ENCODE measurements at regions of chr3 and their contacts with region 1.

Region 1: GRCh38 chr3:50611464-50612233 is at the start of gene CISH:
- DNase-seq: peak; percentile 96
- H3K4me3 ChIP-seq: peak within 1 kb of the TSS; percentile 9 to 51 (median 50)
- H3K27ac ChIP-seq: peak within 1 kb of the TSS; percentile 50
- H3K4me1 ChIP-seq: peaks cover 21% of the 10 kb centered on the region
- H3K27me3 ChIP-seq: no peaks in the 10 kb centered on the region
- CTCF ChIP-seq: peak; percentile 50 to 79
- POLR2A ChIP-seq: no peak
- total RNA-seq, gene CISH: 2.2 and 2.5 TPM in 2 replicates

Region 2: GRCh38 chr3:50436114-50436674 is 175.5 kb before region 1 on chr3:
- CTCF ChIA-PET with region 1: interaction called, 4 read pairs
- POLR2A ChIA-PET with region 1: no interaction called
- dilution Hi-C with region 1: no loop called
- intact Hi-C with region 1: loop called (anchors 1 kb)
- DNase-seq: peak; percentile 42
- H3K4me3 ChIP-seq: no peak overlapping the region
- H3K27ac ChIP-seq: no peak overlapping the region
- H3K4me1 ChIP-seq: no peaks in the 10 kb centered on the region
- H3K27me3 ChIP-seq: no peaks in the 10 kb centered on the region
- CTCF ChIP-seq: peak; percentile 80 to 89
- POLR2A ChIP-seq: no peak

Region 3: GRCh38 chr3:50568947-50569749 is 42.5 kb before region 1 on chr3 and contains the start of gene HEMK1:
- CTCF ChIA-PET with region 1: interaction called, 105 read pairs
- POLR2A ChIA-PET with region 1: interaction called, 9 read pairs
- dilution Hi-C with region 1: no loop called
- intact Hi-C with region 1: loop called (anchors 1 kb)
- DNase-seq: peak; percentile 87
- H3K4me3 ChIP-seq: peak within 1 kb of the TSS; percentile 84 to 91 (median 85)
- H3K27ac ChIP-seq: peak within 1 kb of the TSS; percentile 31
- H3K4me1 ChIP-seq: peaks cover 10% of the 10 kb centered on the region
- H3K27me3 ChIP-seq: no peaks in the 10 kb centered on the region
- CTCF ChIP-seq: no peak
- POLR2A ChIP-seq: peak; percentile 24
- total RNA-seq, gene HEMK1: 12.0 and 15.2 TPM in 2 replicates

Region 4: DNA sequence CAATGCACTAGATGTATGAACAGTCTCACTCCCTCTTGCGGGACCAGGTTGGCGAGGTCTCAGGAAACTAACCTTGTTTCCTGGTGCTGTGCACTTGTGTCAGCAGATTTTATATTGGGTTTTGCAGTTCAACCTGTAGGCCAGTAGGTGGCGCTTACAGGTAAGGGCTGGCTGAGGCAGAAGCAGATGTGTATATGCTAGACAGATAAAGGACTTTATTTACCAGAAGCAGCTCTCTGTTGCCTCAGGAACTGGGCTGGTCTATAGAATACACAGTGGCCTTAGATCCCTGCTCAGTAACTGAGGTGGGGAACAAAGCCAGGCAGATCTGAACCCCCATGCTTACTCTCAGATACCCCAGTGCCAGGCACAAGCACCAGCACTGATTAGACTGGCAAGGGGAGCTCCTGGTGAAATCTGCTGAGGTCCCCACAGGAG is 359.9 kb after region 1 on chr3:
- CTCF ChIA-PET with region 1: interaction called, 8 read pairs
- POLR2A ChIA-PET with region 1: no interaction called
- dilution Hi-C with region 1: no loop called
- intact Hi-C with region 1: loop called (anchors 5 kb)
- DNase-seq: peak; percentile 45
- H3K4me3 ChIP-seq: no peak overlapping the region
- H3K27ac ChIP-seq: no peak overlapping the region
- H3K4me1 ChIP-seq: no peaks in the 10 kb centered on the region
- H3K27me3 ChIP-seq: no peaks in the 10 kb centered on the region
- CTCF ChIP-seq: peak; percentile 75 to 78
- POLR2A ChIP-seq: no peak

Region 5: DNA sequence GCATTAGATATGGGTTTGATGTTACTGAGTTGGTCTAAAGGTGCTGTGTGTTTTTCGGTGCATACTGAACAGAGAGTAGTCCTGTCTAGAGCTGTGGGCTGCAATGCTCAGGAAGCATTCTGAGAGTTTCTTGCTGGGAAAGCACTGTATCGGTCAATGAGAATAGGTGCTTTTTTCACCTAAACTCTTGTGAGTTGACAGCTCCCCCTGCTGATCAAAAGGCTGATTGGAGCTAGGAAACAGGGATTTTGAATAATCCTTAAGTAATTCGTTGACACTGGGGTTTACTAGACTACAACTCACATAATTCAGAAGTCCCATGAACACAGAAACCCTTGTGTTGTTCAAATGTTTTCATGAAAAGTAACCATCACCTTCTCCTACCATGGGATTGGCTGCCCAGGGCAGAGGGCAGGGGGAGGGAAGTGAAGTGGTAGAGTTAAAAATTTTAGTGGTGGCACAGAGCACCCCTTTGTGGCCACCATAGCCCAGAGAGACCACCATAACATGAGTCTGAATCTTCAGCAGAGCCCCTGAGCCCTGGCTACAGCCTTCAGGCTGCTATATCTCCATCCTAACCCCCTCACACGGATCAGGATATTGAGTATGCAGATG is 760.4 kb after region 1 on chr3:
- CTCF ChIA-PET with region 1: interaction called, 64 read pairs
- POLR2A ChIA-PET with region 1: no interaction called
- dilution Hi-C with region 1: no loop called
- intact Hi-C with region 1: loop called (anchors 1 kb)
- DNase-seq: peak; percentile 71
- H3K4me3 ChIP-seq: no peak overlapping the region
- H3K27ac ChIP-seq: no peak overlapping the region
- H3K4me1 ChIP-seq: no peaks in the 10 kb centered on the region
- H3K27me3 ChIP-seq: no peaks in the 10 kb centered on the region
- CTCF ChIP-seq: peak; percentile 60 to 63
- POLR2A ChIP-seq: no peak

Region 6: GRCh38 chr3:51391075-51391567 is 779.5 kb after region 1 on chr3 and contains the start of gene RBM15B:
- CTCF ChIA-PET with region 1: interaction called, 20 read pairs
- POLR2A ChIA-PET with region 1: no interaction called
- dilution Hi-C with region 1: no loop called
- intact Hi-C with region 1: loop called (anchors 1 kb)
- DNase-seq: peak; percentile 96
- H3K4me3 ChIP-seq: peak within 1 kb of the TSS; percentile 29 to 77 (median 36)
- H3K27ac ChIP-seq: peak within 1 kb of the TSS; percentile 50
- H3K4me1 ChIP-seq: peaks cover 49% of the 10 kb centered on the region
- H3K27me3 ChIP-seq: no peaks in the 10 kb centered on the region
- CTCF ChIP-seq: peak in 1 of 2 donors; percentile 91
- POLR2A ChIP-seq: peak; percentile 75
- total RNA-seq, gene RBM15B: 38.3 and 39.1 TPM in 2 replicates

Region 7: DNA sequence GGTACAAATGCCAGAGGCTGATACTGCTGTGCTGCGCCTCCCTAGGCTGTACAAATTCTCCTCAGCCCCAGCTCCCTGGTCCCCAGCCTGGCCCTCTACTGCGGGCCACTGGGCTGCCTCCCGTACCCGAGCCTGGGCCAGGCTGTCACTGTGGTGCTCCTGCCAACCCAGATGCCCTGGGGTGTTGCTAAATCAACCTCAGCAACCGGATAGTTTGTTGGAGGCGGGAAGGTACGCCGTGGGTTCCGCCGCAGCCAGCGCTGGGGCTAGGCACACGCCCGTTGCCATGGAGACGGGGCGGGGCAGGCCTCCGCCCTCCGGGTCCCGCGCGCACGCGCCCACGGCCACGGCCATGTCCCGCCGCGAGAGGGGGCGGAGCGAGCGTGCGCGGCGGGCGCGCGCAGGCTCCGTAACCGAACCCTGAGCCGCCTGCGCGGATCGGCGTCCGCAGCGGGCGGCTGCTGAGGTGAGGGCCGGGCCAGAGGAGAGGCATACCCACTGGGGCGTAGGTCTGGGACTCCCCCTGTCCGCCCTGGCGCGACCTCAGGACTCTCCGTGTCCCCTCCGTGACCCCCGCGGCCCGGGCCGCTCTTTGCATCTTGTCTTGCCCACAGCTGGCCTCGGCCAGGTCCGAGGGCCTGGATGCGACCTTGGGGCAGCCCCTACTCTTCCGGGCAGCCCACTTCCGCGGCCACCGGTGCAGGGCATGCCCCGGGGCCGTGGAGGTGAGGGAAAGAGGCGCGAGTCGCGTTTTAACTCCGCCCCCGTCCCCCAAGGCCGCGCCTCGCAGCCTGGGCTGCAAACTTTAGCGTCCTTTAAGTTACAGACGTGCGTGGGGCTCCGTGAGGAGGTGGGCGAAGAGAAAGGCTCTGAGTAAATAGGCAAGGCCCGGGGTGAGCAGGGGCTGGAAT is 1059.4 kb after region 1 on chr3 and contains the start of gene TEX264:
- CTCF ChIA-PET with region 1: interaction called, 13 read pairs
- POLR2A ChIA-PET with region 1: no interaction called
- dilution Hi-C with region 1: no loop called
- intact Hi-C with region 1: loop called (anchors 10 kb)
- DNase-seq: peak; percentile 69
- H3K4me3 ChIP-seq: peak within 1 kb of the TSS; percentile 72 to 88 (median 82)
- H3K27ac ChIP-seq: peak within 1 kb of the TSS; percentile 55
- H3K4me1 ChIP-seq: peaks cover 12% of the 10 kb centered on the region
- H3K27me3 ChIP-seq: no peaks in the 10 kb centered on the region
- CTCF ChIP-seq: no peak
- POLR2A ChIP-seq: peak; percentile 88
- total RNA-seq, gene TEX264: 26.3 and 29.0 TPM in 2 replicates

Measured in endothelial cell of umbilical vein (primary cell).